Natural killer cell (primary cell): ENCODE measurements at regions of chr7 and their contacts with region 1.

Region 1: GRCh38 chr7:151057989-151058780 is 488 bp upstream of the CDK5 start:
- DNase-seq: peak; percentile 91 to 99
- ATAC-seq: peak; percentile 93 to 98 (median 95)
- H3K4me3 ChIP-seq: peak overlapping the region; percentile 68
- H3K4me3 Mint-ChIP-seq: peak overlapping the region; percentile 96
- H3K27ac ChIP-seq: peak overlapping the region; percentile 90
- H3K27ac Mint-ChIP-seq: peak overlapping the region; percentile 91 to 93
- H3K4me1 ChIP-seq: peaks cover 37% of the 10 kb centered on the region
- H3K4me1 Mint-ChIP-seq: peaks cover 16 to 45% of the 10 kb centered on the region in 2 donors
- H3K27me3 ChIP-seq: no peaks in the 10 kb centered on the region
- H3K27me3 Mint-ChIP-seq: no peaks in the 10 kb centered on the region
- CTCF ChIP-seq: no peak

Region 2: GRCh38 chr7:150340024-150340749 is 718.0 kb before region 1 on chr7:
- intact Hi-C with region 1: no loop called
- DNase-seq: peak in 1 of 2 donors; percentile 20
- ATAC-seq: peak in 1 of 3 donors; percentile 36
- H3K4me3 ChIP-seq: no peak overlapping the region
- H3K4me3 Mint-ChIP-seq: no peak overlapping the region
- H3K27ac ChIP-seq: no peak overlapping the region
- H3K27ac Mint-ChIP-seq: no peak overlapping the region
- H3K4me1 ChIP-seq: peaks cover 12% of the 10 kb centered on the region
- H3K4me1 Mint-ChIP-seq: peaks cover 0 to 11% of the 10 kb centered on the region in 2 donors
- H3K27me3 ChIP-seq: peaks cover 20% of the 10 kb centered on the region
- H3K27me3 Mint-ChIP-seq: peaks cover 24 to 32% of the 10 kb centered on the region in 2 donors
- CTCF ChIP-seq: no peak

Region 3: DNA sequence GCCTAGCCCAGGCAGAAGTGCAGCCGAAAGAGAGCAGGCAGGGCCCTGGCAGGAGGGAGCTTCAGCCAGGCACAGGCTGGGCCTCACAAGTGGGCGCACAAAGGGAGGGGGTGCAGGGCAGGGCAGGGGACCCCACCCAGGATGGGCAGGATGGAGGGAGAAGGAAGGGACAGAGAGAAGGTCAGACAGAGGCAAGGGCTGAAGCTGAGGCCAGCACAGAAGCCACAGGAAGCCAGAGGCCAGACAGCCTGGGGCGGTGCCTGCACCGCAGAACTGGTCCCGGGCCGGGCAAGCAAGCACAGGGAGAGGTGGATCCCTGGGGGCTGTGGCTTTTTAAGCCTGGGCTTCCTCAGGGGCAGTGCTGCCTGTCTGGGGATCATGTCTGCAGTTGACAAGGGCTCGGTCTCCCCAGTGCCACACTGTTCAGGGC is 50.7 kb before region 1 on chr7:
- intact Hi-C with region 1: no loop called
- DNase-seq: peak in 1 of 2 donors; percentile 20
- ATAC-seq: no peak
- H3K4me3 ChIP-seq: no peak overlapping the region
- H3K4me3 Mint-ChIP-seq: peak overlapping the region; percentile 74
- H3K27ac ChIP-seq: no peak overlapping the region
- H3K27ac Mint-ChIP-seq: peak overlapping the region; percentile 76 to 85
- H3K4me1 ChIP-seq: peaks cover 60% of the 10 kb centered on the region
- H3K4me1 Mint-ChIP-seq: peaks cover 40 to 51% of the 10 kb centered on the region in 2 donors
- H3K27me3 ChIP-seq: no peaks in the 10 kb centered on the region
- H3K27me3 Mint-ChIP-seq: peaks cover 0 to 6% of the 10 kb centered on the region in 2 donors
- CTCF ChIP-seq: no peak

Region 4: DNA sequence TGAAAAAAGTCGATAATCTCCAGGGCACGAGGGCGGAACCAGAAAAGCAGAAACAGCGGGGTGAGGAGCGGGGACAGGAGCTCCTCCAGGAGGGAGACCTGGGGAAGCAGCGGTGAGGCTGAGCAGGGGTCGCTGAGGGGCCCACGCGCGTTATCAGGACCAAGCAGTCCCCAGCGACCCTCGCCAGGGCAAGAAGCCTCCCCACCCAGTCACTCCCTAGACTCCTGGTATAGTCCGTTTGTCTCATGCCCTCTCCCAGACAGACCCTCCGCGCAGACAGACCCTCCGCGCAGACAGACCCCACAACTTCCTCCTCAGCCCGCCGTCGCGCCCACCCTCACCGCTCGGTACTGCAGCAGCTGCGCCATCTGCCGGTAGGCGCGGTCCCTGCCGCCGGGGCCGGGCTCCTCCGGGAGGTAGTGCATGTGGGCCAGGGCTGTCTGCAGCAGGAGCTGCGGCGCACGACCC is 40.2 kb before region 1 on chr7:
- intact Hi-C with region 1: loop called (anchors 1 kb)
- DNase-seq: peak; percentile 76 to 87
- ATAC-seq: peak; percentile 56 to 61 (median 59)
- H3K4me3 ChIP-seq: peak overlapping the region; percentile 23
- H3K4me3 Mint-ChIP-seq: peak overlapping the region; percentile 87
- H3K27ac ChIP-seq: no peak overlapping the region
- H3K27ac Mint-ChIP-seq: peak overlapping the region; percentile 18 to 77
- H3K4me1 ChIP-seq: peaks cover 46% of the 10 kb centered on the region
- H3K4me1 Mint-ChIP-seq: peaks cover 38 to 54% of the 10 kb centered on the region in 2 donors
- H3K27me3 ChIP-seq: peaks cover 19% of the 10 kb centered on the region
- H3K27me3 Mint-ChIP-seq: peaks cover 0 to 41% of the 10 kb centered on the region in 2 donors
- CTCF ChIP-seq: peak; percentile 95

Region 5: DNA sequence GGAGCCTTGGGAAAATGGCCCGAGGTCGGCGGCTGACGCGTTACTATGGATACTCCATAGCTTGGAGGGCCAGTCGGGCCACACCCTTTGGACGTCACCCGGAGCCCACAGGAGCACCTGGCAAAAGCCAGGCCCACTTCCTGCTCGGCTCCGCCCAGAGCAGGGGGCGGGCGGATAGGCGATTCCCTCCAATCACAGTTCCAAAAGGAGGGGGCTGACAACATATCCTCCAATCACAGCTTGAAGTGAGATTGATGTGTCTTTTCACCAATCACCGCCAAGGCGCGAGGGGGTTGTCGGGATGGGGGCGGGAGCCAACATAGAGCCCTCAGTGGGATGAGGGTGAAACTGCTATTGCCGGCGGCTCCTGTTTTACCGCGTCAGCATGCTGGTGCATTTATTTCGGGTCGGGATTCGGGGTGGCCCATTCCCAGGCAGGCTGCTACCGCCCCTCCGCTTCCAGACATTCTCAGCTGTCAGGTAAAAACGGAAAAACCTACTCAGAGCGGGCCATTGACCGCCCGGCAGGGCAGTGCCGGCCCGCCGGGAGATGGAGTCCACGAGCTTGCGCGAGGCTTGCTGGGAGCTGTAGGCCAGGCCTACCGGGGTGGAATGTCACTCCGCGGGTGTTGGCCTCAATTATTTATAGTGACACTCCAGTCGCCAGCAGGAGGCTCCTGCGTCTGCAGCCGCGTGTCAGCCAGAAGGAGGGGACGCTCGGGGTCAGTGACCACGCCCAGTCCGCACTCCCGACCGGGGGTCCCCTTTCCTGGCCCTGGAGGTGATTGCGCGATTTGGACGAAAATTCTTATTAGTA is 29.8 kb before region 1 on chr7 and contains the start of gene ABCB8:
- intact Hi-C with region 1: loop called (anchors 1 kb)
- DNase-seq: peak; percentile 95 to 99
- ATAC-seq: peak; percentile 91 to 96 (median 92)
- H3K4me3 ChIP-seq: peak within 1 kb of the TSS; percentile 84
- H3K4me3 Mint-ChIP-seq: peak within 1 kb of the TSS; percentile 95
- H3K27ac ChIP-seq: peak within 1 kb of the TSS; percentile 96
- H3K27ac Mint-ChIP-seq: peak within 1 kb of the TSS; percentile 96 to 97
- H3K4me1 ChIP-seq: peaks cover 17% of the 10 kb centered on the region
- H3K4me1 Mint-ChIP-seq: peaks cover 15 to 16% of the 10 kb centered on the region in 2 donors
- H3K27me3 ChIP-seq: no peaks in the 10 kb centered on the region
- H3K27me3 Mint-ChIP-seq: no peaks in the 10 kb centered on the region
- CTCF ChIP-seq: peak; percentile 56
- total RNA-seq, gene ABCB8: 50.6 to 60.5 (median 53.7) TPM

Region 6: GRCh38 chr7:151068068-151068773 is 10.0 kb after region 1 on chr7:
- intact Hi-C with region 1: no loop called
- DNase-seq: no peak
- ATAC-seq: no peak
- H3K4me3 ChIP-seq: no peak overlapping the region
- H3K4me3 Mint-ChIP-seq: no peak overlapping the region
- H3K27ac ChIP-seq: no peak overlapping the region
- H3K27ac Mint-ChIP-seq: no peak overlapping the region
- H3K4me1 ChIP-seq: no peaks in the 10 kb centered on the region
- H3K4me1 Mint-ChIP-seq: no peaks in the 10 kb centered on the region
- H3K27me3 ChIP-seq: no peaks in the 10 kb centered on the region
- H3K27me3 Mint-ChIP-seq: no peaks in the 10 kb centered on the region
- CTCF ChIP-seq: no peak

Region 7: GRCh38 chr7:151080522-151081169 is 22.5 kb after region 1 on chr7 and contains the start of gene FASTK:
- intact Hi-C with region 1: loop called (anchors 1 kb)
- DNase-seq: peak; percentile 82 to 94
- ATAC-seq: peak; percentile 73 to 91 (median 79)
- H3K4me3 ChIP-seq: peak within 1 kb of the TSS; percentile 78
- H3K4me3 Mint-ChIP-seq: peak within 1 kb of the TSS; percentile 89
- H3K27ac ChIP-seq: peak within 1 kb of the TSS; percentile 78
- H3K27ac Mint-ChIP-seq: peak within 1 kb of the TSS; percentile 50 to 98
- H3K4me1 ChIP-seq: peaks cover 44% of the 10 kb centered on the region
- H3K4me1 Mint-ChIP-seq: peaks cover 30 to 51% of the 10 kb centered on the region in 2 donors
- H3K27me3 ChIP-seq: no peaks in the 10 kb centered on the region
- H3K27me3 Mint-ChIP-seq: no peaks in the 10 kb centered on the region
- CTCF ChIP-seq: no peak
- total RNA-seq, gene FASTK: 72.8 to 89.4 (median 85.2) TPM

Region 8: GRCh38 chr7:151110941-151111645 is 52.9 kb after region 1 on chr7:
- intact Hi-C with region 1: loop called (anchors 1 kb)
- DNase-seq: peak; percentile 69 to 87
- ATAC-seq: peak; percentile 74 to 91 (median 80)
- H3K4me3 ChIP-seq: no peak overlapping the region
- H3K4me3 Mint-ChIP-seq: no peak overlapping the region
- H3K27ac ChIP-seq: no peak overlapping the region
- H3K27ac Mint-ChIP-seq: no peak overlapping the region
- H3K4me1 ChIP-seq: peaks cover 11% of the 10 kb centered on the region
- H3K4me1 Mint-ChIP-seq: peaks cover 0 to 9% of the 10 kb centered on the region in 2 donors
- H3K27me3 ChIP-seq: peaks cover 2% of the 10 kb centered on the region
- H3K27me3 Mint-ChIP-seq: no peaks in the 10 kb centered on the region
- CTCF ChIP-seq: peak; percentile 85

Region 9: GRCh38 chr7:151226875-151227782 is 168.9 kb after region 1 on chr7 and contains the start of gene ABCF2:
- intact Hi-C with region 1: loop called (anchors 1 kb)
- DNase-seq: peak; percentile 96 to 98
- ATAC-seq: peak; percentile 98 to 100 (median 99)
- H3K4me3 ChIP-seq: peak within 1 kb of the TSS; percentile 64
- H3K4me3 Mint-ChIP-seq: peak within 1 kb of the TSS; percentile 95
- H3K27ac ChIP-seq: peak within 1 kb of the TSS; percentile 61
- H3K27ac Mint-ChIP-seq: peak within 1 kb of the TSS; percentile 86 to 94
- H3K4me1 ChIP-seq: peaks cover 29% of the 10 kb centered on the region
- H3K4me1 Mint-ChIP-seq: peaks cover 29 to 36% of the 10 kb centered on the region in 2 donors
- H3K27me3 ChIP-seq: no peaks in the 10 kb centered on the region
- H3K27me3 Mint-ChIP-seq: no peaks in the 10 kb centered on the region
- CTCF ChIP-seq: no peak
- total RNA-seq, gene ABCF2: 12.1 to 26.1 (median 17.6) TPM

Region 10: GRCh38 chr7:151232091-151232916 is 174.1 kb after region 1 on chr7 and contains the start of gene CHPF2:
- intact Hi-C with region 1: loop called (anchors 1 kb)
- DNase-seq: peak; percentile 89 to 94
- ATAC-seq: peak; percentile 82 to 95 (median 93)
- H3K4me3 ChIP-seq: peak within 1 kb of the TSS; percentile 93
- H3K4me3 Mint-ChIP-seq: peak within 1 kb of the TSS; percentile 100
- H3K27ac ChIP-seq: peak within 1 kb of the TSS; percentile 83
- H3K27ac Mint-ChIP-seq: peak within 1 kb of the TSS; percentile 96 to 98
- H3K4me1 ChIP-seq: peaks cover 34% of the 10 kb centered on the region
- H3K4me1 Mint-ChIP-seq: peaks cover 37 to 45% of the 10 kb centered on the region in 2 donors
- H3K27me3 ChIP-seq: no peaks in the 10 kb centered on the region
- H3K27me3 Mint-ChIP-seq: no peaks in the 10 kb centered on the region
- CTCF ChIP-seq: no peak
- total RNA-seq, gene CHPF2: 47.0 to 51.6 (median 48.6) TPM